Endothelial cell of umbilical vein (primary cell): ENCODE measurements at regions of chr5 and their contacts with region 1.

Region 1: GRCh38 chr5:125176009-125176477 is 429.6 kb upstream of the ZNF608 start:
- DNase-seq: no peak
- H3K4me3 ChIP-seq: no peak overlapping the region
- H3K27ac ChIP-seq: no peak overlapping the region
- H3K4me1 ChIP-seq: no peaks in the 10 kb centered on the region
- H3K27me3 ChIP-seq: no peaks in the 10 kb centered on the region
- CTCF ChIP-seq: no peak
- POLR2A ChIP-seq: no peak

Region 2: DNA sequence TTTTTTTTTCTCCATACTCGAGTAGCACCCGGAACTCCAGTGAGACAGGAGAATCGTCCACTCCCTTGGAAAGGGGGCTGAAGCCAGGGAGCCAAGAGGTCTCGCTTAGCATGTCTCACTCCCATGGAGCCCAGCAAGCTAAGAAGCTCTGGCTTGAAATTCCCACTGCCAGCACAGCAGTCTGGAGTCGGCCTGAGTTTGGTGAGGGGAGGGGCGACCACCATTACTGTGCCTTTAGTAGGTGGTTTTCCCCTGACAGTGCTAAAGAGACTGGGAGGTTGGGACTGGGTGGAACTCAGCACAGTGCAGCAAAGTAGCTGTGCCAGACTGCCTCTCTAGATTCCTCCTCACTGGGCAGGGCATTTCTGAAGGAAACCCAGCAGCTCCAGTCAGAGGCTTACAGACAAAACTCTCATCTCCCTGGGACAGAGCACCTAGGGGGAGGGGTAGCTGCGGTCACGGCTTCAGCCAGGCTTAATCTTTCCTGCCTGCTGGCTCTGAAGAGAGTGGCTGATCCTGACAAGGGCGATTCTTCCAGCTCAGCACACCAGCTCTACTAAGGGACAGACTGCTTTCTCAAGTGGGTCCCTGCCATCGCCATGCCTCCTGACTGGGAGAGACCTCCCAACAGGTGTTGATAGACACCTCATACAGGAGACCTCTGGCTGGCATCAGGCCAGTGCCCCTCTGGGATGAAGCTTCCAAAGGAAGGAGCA is 15.1 kb before region 1 on chr5:
- CTCF ChIA-PET with region 1: no interaction called
- POLR2A ChIA-PET with region 1: no interaction called
- dilution Hi-C with region 1: no loop called
- intact Hi-C with region 1: no loop called
- DNase-seq: no peak
- H3K4me3 ChIP-seq: no peak overlapping the region
- H3K27ac ChIP-seq: no peak overlapping the region
- H3K4me1 ChIP-seq: no peaks in the 10 kb centered on the region
- H3K27me3 ChIP-seq: no peaks in the 10 kb centered on the region
- CTCF ChIP-seq: no peak
- POLR2A ChIP-seq: no peak

Region 3: GRCh38 chr5:125194883-125195282 is 18.8 kb after region 1 on chr5:
- CTCF ChIA-PET with region 1: no interaction called
- POLR2A ChIA-PET with region 1: no interaction called
- dilution Hi-C with region 1: no loop called
- intact Hi-C with region 1: loop called (anchors 1 kb)
- DNase-seq: no peak
- H3K4me3 ChIP-seq: no peak overlapping the region
- H3K27ac ChIP-seq: no peak overlapping the region
- H3K4me1 ChIP-seq: no peaks in the 10 kb centered on the region
- H3K27me3 ChIP-seq: no peaks in the 10 kb centered on the region
- CTCF ChIP-seq: no peak
- POLR2A ChIP-seq: no peak